ENCODE measurements at regions of chr1 and their contacts with region 1.

Region 1: DNA sequence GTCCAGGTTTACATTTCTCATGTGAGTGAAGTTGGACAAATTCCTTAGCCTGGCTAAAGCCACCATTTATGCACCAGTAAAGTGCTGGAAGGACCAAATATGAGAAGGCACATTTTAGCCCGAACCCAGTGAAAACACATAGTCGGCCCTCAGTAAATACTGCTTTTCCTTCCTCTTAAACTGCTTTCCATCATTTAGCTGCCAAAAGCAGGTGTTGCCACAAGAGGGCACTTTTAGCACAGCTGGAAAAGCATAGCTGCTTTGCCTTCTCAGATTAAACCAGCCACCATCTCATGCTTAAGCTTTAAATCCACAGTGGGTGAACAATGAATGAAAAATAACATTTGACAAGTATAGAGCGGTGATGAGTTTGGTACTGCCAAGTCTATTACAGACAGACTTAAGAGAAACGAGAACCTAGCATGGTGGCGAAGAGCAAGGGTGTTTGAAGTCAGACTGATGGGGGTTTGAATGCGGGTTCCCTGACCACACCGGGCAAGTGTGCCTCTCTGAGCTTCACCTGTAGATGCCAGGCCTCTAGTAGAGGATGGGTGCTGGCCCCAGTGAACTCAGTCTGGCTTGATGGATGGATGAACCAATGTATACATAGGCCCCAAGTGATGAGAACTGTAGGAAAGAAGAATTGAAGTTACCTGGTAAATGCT is 57.8 kb downstream of the SLC35D1 start:
- DNase-seq: peak; percentile 14 to 75 (median 63)
- ATAC-seq: peak; percentile 93
- H3K4me3 ChIP-seq: no peak overlapping the region
- H3K4me3 Mint-ChIP-seq: no peak overlapping the region
- H3K27ac ChIP-seq: no peak overlapping the region
- H3K27ac Mint-ChIP-seq: peak overlapping the region in 5 of 9 donors; percentile 7 to 78 (median 74)
- H3K4me1 ChIP-seq: peaks cover 0 to 5% of the 10 kb centered on the region in 2 donors
- H3K4me1 Mint-ChIP-seq: peaks cover 4 to 24% (median 23%) of the 10 kb centered on the region in 7 donors
- H3K27me3 ChIP-seq: no peaks in the 10 kb centered on the region
- H3K27me3 Mint-ChIP-seq: no peaks in the 10 kb centered on the region

Region 2: DNA sequence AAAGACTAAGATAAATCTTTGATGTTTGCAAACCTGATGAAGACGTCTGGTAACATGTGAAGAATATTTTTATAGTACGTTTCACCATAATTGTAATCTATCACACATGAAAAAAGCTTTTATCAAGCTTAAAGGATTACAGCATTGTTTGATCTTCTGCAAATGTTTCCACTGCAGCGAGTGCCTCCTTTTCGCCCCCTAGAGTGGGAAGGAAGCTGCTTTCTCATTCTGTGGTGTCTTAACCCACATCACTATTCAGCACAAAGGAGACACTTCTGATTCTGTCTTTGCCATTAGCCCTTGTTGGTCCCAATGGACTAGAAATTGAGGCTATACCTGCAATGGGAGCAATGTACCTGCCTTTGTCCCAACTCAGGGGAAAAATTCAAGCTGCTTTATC is 265.5 kb after region 1 on chr1:
- CTCF ChIA-PET with region 1: interaction called, 3 read pairs
- POLR2A ChIA-PET with region 1: no interaction called
- intact Hi-C with region 1: loop called in 1 of 2 experiments (anchors 1 kb)
- DNase-seq: peak in 8 of 9 donors; percentile 24 to 67 (median 57)
- ATAC-seq: peak; percentile 52
- H3K4me3 ChIP-seq: no peak overlapping the region
- H3K4me3 Mint-ChIP-seq: peak overlapping the region in 7 of 10 donors; percentile 17 to 73 (median 34)
- H3K27ac ChIP-seq: no peak overlapping the region
- H3K27ac Mint-ChIP-seq: peak overlapping the region in 1 of 9 donors; percentile 8
- H3K4me1 ChIP-seq: peaks cover 17 to 22% of the 10 kb centered on the region in 2 donors
- H3K4me1 Mint-ChIP-seq: peaks cover 12 to 44% (median 31%) of the 10 kb centered on the region in 7 donors
- H3K27me3 ChIP-seq: no peaks in the 10 kb centered on the region
- H3K27me3 Mint-ChIP-seq: no peaks in the 10 kb centered on the region